ENCODE measurements at regions of chr11 and their contacts with region 1.

Region 1: DNA sequence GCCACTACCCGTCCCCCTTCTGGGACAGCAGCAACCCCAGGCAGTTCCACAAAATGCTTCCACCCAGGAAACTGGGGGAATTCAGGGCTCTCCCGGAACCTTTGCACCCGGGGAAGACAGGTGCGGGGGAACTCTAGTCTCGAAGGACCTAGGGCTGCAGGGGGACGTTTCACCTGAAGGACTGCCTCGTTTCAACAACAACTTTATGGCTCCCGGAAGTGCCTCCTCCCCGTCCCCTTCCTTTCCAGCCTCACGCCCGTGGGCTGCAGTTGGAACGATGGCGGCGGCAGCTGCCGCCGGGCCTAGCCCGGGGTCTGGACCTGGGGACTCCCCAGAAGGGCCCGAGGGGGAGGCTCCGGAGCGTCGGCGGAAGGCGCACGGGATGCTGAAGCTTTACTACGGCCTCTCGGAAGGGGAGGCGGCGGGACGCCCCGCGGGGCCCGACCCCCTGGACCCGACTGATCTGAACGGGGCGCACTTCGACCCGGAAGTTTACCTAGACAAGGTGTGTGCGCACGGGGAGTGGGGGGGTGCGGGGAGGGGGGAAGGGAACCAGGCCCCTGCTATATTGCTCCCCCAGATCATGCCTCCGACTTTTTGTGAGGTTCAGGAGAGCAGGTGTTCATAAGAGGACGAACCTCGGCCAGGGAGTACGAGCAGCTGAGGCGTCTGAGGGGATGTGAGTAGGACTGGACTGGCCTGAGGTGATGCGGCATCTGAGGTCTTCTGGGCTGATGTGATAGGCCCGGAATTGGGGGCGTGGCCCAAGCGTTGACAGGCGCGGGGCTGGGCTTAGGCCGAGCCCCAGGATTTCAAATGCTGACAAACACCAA is at the start of gene VPS51:
- DNase-seq: peak; percentile 74
- ATAC-seq: peak; percentile 92
- H3K4me3 Mint-ChIP-seq: peak within 1 kb of the TSS; percentile 91
- H3K27ac Mint-ChIP-seq: peak within 1 kb of the TSS; percentile 88
- H3K4me1 Mint-ChIP-seq: peaks cover 18% of the 10 kb centered on the region
- H3K27me3 Mint-ChIP-seq: no peaks in the 10 kb centered on the region
- CTCF ChIP-seq: no peak
- total RNA-seq, gene VPS51: 224 and 243 TPM in 2 replicates

Region 2: DNA sequence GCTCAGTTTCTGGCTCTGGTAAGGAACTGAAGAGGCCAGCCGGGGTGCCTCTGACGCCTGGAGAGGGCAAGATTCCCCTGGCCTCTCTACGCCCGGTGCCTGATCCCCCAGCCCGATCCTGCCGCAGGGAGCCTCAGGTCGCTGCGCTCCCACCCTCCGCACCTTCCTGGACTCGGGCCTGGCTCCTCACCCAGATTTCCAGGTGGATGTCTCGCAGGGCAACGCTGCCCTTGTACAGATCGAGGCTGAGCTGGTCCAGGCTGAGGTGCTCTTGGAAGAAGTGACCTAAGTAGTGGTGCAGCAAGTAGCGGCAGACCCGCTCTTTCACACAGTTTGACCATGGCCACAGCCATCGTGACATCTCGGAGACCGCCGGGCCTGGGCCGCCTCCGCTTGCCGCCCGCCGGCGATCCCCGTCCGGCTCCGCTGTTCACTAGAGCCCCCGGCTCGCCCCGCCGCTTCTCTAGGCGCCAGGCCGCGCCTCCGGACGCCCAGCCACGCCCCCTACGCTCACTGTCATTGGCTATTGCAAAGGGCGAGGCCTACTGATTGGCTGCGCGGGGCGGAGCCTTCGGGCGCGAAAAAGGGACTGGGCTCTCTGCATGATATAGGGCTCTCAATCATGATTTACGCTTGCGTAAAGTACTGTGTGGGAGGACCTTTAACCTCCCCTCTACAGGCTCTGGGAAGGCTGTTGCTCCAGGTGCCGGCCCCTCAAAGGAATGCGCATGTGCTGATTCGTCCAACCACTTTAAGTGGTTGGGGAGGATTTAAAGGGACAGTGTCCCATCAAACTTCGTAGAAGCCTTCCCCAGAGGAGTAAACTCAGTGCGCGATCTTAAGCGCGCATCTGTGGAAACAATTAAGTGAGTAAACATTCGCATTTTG is 179.2 kb before region 1 on chr11 and contains the start of gene ATG2A:
- CTCF ChIA-PET with region 1: no interaction called
- POLR2A ChIA-PET with region 1: interaction called, 4 read pairs
- intact Hi-C with region 1: loop called (anchors 2 kb)
- DNase-seq: peak; percentile 97
- ATAC-seq: peak; percentile 98
- H3K4me3 Mint-ChIP-seq: peak within 1 kb of the TSS; percentile 88
- H3K27ac Mint-ChIP-seq: peak within 1 kb of the TSS; percentile 85
- H3K4me1 Mint-ChIP-seq: peaks cover 38% of the 10 kb centered on the region
- H3K27me3 Mint-ChIP-seq: no peaks in the 10 kb centered on the region
- CTCF ChIP-seq: no peak
- total RNA-seq, gene ATG2A: 31.2 and 35.0 TPM in 2 replicates

Region 3: GRCh38 chr11:65040847-65041621 is 55.2 kb before region 1 on chr11 and contains the start of gene SAC3D1:
- CTCF ChIA-PET with region 1: no interaction called
- POLR2A ChIA-PET with region 1: interaction called, 3 read pairs
- intact Hi-C with region 1: loop called (anchors 1 kb)
- DNase-seq: peak; percentile 89
- ATAC-seq: peak; percentile 93
- H3K4me3 Mint-ChIP-seq: peak within 1 kb of the TSS; percentile 93
- H3K27ac Mint-ChIP-seq: peak within 1 kb of the TSS; percentile 95
- H3K4me1 Mint-ChIP-seq: peaks cover 11% of the 10 kb centered on the region
- H3K27me3 Mint-ChIP-seq: no peaks in the 10 kb centered on the region
- CTCF ChIP-seq: no peak
- total RNA-seq, gene SAC3D1: 3.8 and 5.4 TPM in 2 replicates

Region 4: GRCh38 chr11:65083834-65084597 is 12.2 kb before region 1 on chr11 and contains the starts of genes CDCA5 and ZFPL1:
- CTCF ChIA-PET with region 1: no interaction called
- POLR2A ChIA-PET with region 1: interaction called, 7 read pairs
- intact Hi-C with region 1: loop called (anchors 1 kb)
- DNase-seq: peak; percentile 97
- ATAC-seq: peak; percentile 92
- H3K4me3 Mint-ChIP-seq: peak within 1 kb of the TSS; percentile 93
- H3K27ac Mint-ChIP-seq: peak within 1 kb of the TSS; percentile 94
- H3K4me1 Mint-ChIP-seq: peaks cover 25% of the 10 kb centered on the region
- H3K27me3 Mint-ChIP-seq: no peaks in the 10 kb centered on the region
- CTCF ChIP-seq: no peak
- total RNA-seq, gene CDCA5: 2.6 and 3.4 TPM in 2 replicates
- total RNA-seq, gene ZFPL1: 35.7 and 36.6 TPM in 2 replicates

Region 5: GRCh38 chr11:65961232-65961901 is 865.2 kb after region 1 on chr11 and contains the start of gene SART1:
- CTCF ChIA-PET with region 1: no interaction called
- POLR2A ChIA-PET with region 1: no interaction called
- intact Hi-C with region 1: no loop called
- DNase-seq: peak; percentile 85
- ATAC-seq: peak; percentile 89
- H3K4me3 Mint-ChIP-seq: peak within 1 kb of the TSS; percentile 97
- H3K27ac Mint-ChIP-seq: peak within 1 kb of the TSS; percentile 95
- H3K4me1 Mint-ChIP-seq: peaks cover 50% of the 10 kb centered on the region
- H3K27me3 Mint-ChIP-seq: no peaks in the 10 kb centered on the region
- CTCF ChIP-seq: no peak
- total RNA-seq, gene SART1: 86.6 and 92.3 TPM in 2 replicates

Measured in activated B cell treated with CpG ODN at 0.5 μM for 24 hours (primary cell).